Motor neuron (in vitro differentiated cells): ENCODE measurements at regions of chr2 and their contacts with region 1.

Region 1: DNA sequence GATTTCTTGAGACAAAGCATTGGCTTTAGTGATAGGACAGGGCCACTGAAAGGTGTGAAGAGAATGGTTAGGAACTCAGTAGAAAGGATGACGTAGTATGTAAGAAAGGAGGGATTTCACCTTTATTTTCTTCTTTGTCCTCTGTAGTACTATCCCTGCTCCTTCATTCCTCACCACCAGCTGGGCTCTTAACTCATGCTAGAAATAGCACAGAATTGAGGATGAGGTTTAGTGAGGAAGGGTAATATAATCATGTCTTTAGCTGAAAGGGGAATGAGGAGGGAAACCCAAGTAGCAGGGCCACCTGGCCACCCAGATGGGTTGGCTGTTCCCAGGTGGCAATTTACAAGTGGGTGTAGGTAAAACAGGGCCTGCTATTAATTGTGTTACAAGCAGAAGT is 15.2 kb downstream of the ACVR2A start:
- ATAC-seq: no peak
- H3K4me3 ChIP-seq: no peak overlapping the region
- H3K27ac ChIP-seq: no peak overlapping the region
- H3K4me1 ChIP-seq: peaks cover 7 to 29% of the 10 kb centered on the region in 2 donors

Region 2: DNA sequence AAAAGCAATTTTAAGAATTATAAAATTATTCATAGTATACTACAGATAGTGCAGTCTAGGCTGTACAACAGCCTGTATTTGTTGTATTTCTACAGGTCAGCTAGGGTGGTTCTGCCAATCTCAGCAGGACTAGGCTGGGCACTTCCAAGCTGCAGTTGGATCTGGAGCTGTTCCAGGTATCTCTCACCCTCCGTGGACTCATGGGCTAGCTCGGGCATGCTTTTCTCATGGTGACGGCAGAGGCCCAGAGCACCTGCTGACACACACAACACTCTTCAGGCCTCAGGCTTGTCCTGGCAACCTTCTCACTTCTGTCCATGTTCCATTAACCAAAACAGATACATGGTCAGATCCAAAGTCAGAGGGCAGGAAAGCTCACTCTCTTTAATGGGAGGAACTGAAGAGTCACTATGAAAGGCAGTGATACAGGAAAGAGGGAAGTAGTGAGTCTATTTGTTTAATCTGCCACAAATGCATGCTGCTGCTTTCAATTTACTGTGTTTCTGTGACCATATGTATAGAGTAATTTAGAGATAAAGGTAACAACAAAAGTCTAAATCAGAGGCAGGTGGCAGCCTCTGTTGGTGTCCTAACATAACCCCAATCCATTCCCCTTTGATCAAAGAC is 477.6 kb before region 1 on chr2:
- in situ Hi-C with region 1: loop called in 1 of 9 experiments (anchors 25 kb)
- ATAC-seq: peak in 1 of 8 experiments; percentile 67
- H3K4me3 ChIP-seq: no peak overlapping the region
- H3K27ac ChIP-seq: no peak overlapping the region
- H3K4me1 ChIP-seq: no peaks in the 10 kb centered on the region

Region 3: DNA sequence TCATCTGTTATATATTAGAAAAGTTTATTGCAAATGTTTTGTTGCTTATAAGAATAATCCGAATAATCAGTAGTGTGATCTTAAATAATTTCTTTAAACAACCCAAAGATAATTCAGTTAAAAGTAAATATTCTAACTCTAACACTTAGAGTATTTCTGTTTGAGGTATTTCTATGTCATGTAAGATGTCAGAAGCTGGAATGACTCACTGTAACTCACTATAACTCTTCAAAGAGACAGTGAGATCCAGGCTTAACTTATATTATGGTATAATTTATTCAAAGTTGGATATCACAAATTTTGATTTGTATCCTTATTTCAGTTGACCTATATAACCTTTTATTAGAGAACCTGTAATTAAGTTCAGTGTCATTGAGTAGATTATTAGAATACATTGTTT is 167.8 kb after region 1 on chr2:
- in situ Hi-C with region 1: no loop called
- ATAC-seq: no peak
- H3K4me3 ChIP-seq: no peak overlapping the region
- H3K27ac ChIP-seq: no peak overlapping the region
- H3K4me1 ChIP-seq: no peaks in the 10 kb centered on the region